ENCODE measurements at regions of chr10 and their contacts with region 1.

Region 1: GRCh38 chr10:32346134-32346550 is 816 bp downstream of the EPC1 start:
- DNase-seq: peak; percentile 96 to 99
- H3K4me3 ChIP-seq: peak overlapping the region; percentile 66 to 93 (median 84)
- H3K27ac ChIP-seq: peak overlapping the region; percentile 98 to 100 (median 100)
- H3K4me1 ChIP-seq: peaks cover 36 to 83% (median 58%) of the 10 kb centered on the region in 4 donors
- H3K27me3 ChIP-seq: no peaks in the 10 kb centered on the region
- CTCF ChIP-seq: peak in 6 of 7 experiments; percentile 30 to 97 (median 93)
- EP300 ChIP-seq: no peak
- POLR2A ChIP-seq: no peak

Region 2: GRCh38 chr10:32112055-32112454 is 234.1 kb before region 1 on chr10:
- intact Hi-C with region 1: no loop called
- DNase-seq: no peak
- H3K4me3 ChIP-seq: no peak overlapping the region
- H3K27ac ChIP-seq: no peak overlapping the region
- H3K4me1 ChIP-seq: no peaks in the 10 kb centered on the region
- H3K27me3 ChIP-seq: no peaks in the 10 kb centered on the region
- CTCF ChIP-seq: no peak
- EP300 ChIP-seq: no peak
- POLR2A ChIP-seq: no peak

Region 3: GRCh38 chr10:32190890-32191491 is 155.2 kb before region 1 on chr10:
- intact Hi-C with region 1: loop called (anchors 5 kb)
- DNase-seq: peak in 1 of 2 donors; percentile 75
- H3K4me3 ChIP-seq: no peak overlapping the region
- H3K27ac ChIP-seq: no peak overlapping the region
- H3K4me1 ChIP-seq: peaks cover 0 to 18% (median 7%) of the 10 kb centered on the region in 4 donors
- H3K27me3 ChIP-seq: no peaks in the 10 kb centered on the region
- CTCF ChIP-seq: peak in 5 of 7 experiments; percentile 31 to 78 (median 69)
- EP300 ChIP-seq: no peak
- POLR2A ChIP-seq: no peak